Activated T-helper 2 cell treated with anti-CD3 and anti-CD28 coated beads, Interferon-gamma antibody, Interleukin-2, Interleukin-4, amounts not matched to agents 10 μg/mL and 5 μg/mL and 100 μg/mL, durations not matched to agents 14 hours and 24 hours and 36 hours (primary cell): ENCODE measurements at regions of chr2 and their contacts with region 1.

Region 1: DNA sequence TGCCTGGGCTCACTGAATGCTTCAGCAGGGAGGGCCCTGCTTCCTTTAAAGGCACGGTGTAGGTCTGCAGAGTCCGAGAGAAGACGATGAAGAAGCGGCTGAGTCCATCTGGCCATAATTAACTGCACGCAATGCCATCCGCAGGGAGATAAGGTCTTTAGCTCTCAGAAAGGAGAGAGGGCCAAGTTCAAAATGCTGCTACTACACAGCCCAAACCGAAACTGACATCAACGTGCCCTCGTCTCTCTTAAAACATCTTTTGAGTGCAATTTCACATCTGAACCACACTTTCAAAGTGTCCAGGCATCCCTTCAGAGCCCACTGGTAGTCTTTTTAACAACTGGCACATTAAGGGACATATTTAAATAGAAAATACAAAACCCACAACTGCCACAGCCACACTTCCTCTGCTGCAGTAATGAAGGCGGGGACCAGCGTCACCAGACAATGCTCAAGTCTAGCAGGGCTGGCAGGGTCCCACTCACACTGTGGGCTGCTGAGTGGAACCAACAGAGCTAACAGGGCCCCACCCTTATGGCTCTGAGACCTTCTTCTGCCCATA is 35.8 kb downstream of the ST3GAL5 start:
- DNase-seq: peak; percentile 54
- H3K4me3 Mint-ChIP-seq: peak overlapping the region; percentile 75
- H3K27ac Mint-ChIP-seq: peak overlapping the region; percentile 99
- H3K4me1 Mint-ChIP-seq: peaks cover 62% of the 10 kb centered on the region
- H3K27me3 Mint-ChIP-seq: no peaks in the 10 kb centered on the region

Region 2: GRCh38 chr2:85662899-85663593 is 190.0 kb before region 1 on chr2:
- intact Hi-C with region 1: no loop called
- DNase-seq: no peak
- H3K4me3 Mint-ChIP-seq: no peak overlapping the region
- H3K27ac Mint-ChIP-seq: no peak overlapping the region
- H3K4me1 Mint-ChIP-seq: no peaks in the 10 kb centered on the region
- H3K27me3 Mint-ChIP-seq: no peaks in the 10 kb centered on the region

Region 3: DNA sequence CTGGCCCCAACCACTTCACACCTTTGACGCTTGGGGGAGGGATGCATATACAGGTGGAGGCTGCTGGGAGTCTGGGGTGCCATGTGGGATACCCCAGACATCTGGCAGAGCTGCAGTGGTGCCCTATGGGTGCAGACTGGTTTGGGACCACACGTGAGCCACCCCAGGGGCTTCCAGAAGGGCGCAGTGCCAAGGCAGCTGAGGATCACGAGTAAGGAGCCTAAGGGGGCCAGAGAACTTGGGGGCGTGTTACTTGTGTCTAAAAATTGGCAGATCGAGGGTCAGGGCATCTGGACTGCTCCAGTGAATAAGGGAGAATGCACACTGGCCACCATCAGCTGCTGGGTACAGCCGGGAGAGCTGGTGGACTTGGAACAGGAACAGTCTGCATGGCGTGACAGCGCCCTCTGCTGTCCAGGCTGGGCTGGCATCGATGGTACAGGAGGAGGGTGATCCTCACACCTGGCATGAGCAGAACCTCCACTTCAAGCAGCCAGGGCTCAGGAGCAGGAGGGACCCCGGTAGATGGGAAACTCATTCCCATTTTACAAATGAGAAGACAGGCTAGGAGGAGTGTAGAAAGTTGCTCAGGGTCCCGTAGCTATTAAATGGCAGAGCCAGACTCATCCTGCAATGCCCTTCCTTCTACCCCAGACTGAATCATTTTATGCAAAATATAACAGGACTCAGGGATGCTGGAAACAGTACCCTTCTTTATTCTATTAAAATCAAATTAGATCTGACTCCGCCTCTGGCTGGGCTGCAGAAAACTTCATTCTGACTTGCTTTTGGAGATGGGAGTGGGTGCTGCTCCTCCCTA is 38.8 kb before region 1 on chr2:
- intact Hi-C with region 1: no loop called
- DNase-seq: peak; percentile 68
- H3K4me3 Mint-ChIP-seq: no peak overlapping the region
- H3K27ac Mint-ChIP-seq: no peak overlapping the region
- H3K4me1 Mint-ChIP-seq: no peaks in the 10 kb centered on the region
- H3K27me3 Mint-ChIP-seq: peaks cover 8% of the 10 kb centered on the region

Region 4: GRCh38 chr2:85826990-85827878 is 25.8 kb before region 1 on chr2:
- intact Hi-C with region 1: loop called (anchors 1 kb)
- DNase-seq: peak; percentile 75
- H3K4me3 Mint-ChIP-seq: no peak overlapping the region
- H3K27ac Mint-ChIP-seq: no peak overlapping the region
- H3K4me1 Mint-ChIP-seq: peaks cover 32% of the 10 kb centered on the region
- H3K27me3 Mint-ChIP-seq: peaks cover 29% of the 10 kb centered on the region

Region 5: DNA sequence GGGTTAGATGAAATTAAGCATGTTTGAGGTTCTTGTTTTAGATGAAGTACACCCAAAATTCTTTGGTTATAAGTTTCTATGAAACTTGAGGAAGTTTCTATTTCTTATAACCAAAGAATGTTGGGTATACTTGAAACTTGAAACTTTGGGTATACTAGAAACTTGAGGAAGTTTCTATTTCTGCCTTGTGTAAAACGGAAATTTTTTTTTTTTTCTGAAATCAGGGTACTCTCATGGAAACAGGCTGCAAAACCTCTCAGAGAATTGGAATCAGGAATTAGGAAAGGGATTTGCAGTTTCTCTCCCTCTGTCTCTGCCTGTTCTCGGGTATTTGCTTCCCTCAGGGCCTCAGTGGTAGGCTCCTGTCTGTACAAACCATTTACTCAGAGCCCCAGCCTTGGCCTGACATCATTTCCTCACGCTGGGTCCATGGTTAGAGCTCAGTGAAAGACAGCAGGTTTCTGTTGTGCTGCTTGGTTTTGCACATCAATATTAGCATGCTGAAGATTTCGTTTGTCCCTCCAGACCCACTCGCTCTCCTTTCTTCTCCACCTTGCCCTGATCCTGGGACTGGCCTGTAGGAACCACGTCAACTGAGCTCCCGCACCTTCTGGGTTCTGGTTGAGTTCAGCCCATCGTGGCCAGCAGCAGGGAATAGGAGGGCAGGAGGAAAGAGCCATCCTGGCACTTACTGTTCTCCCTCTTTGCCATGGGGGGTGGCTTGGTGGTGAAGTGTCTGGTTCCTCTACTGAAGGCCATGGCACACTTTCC is 146.2 kb after region 1 on chr2:
- intact Hi-C with region 1: loop called (anchors 10 kb)
- DNase-seq: peak; percentile 58
- H3K4me3 Mint-ChIP-seq: peak overlapping the region; percentile 20
- H3K27ac Mint-ChIP-seq: peak overlapping the region; percentile 77
- H3K4me1 Mint-ChIP-seq: peaks cover 68% of the 10 kb centered on the region
- H3K27me3 Mint-ChIP-seq: no peaks in the 10 kb centered on the region